Pancreas (tissue), 10 donors: ENCODE measurements at regions of chr3 and their contacts with region 1.

Region 1: GRCh38 chr3:133384331-133385027 is 15.4 kb upstream of the BFSP2 start:
- DNase-seq: peak; percentile 52 to 78 (median 67)
- ATAC-seq: peak; percentile 74 to 90 (median 88)
- H3K4me3 ChIP-seq: no peak overlapping the region
- H3K27ac ChIP-seq: no peak overlapping the region
- H3K4me1 ChIP-seq: peaks cover 6 to 14% (median 10%) of the 10 kb centered on the region in 3 donors
- H3K27me3 ChIP-seq: no peaks in the 10 kb centered on the region
- CTCF ChIP-seq: peak; percentile 15 to 70 (median 66)

Region 2: GRCh38 chr3:132722164-132723024 is 662.1 kb before region 1 on chr3 and contains the start of gene NPHP3:
- intact Hi-C with region 1: loop called in 1 of 3 experiments (anchors 10 kb)
- DNase-seq: peak; percentile 97 to 100 (median 98)
- ATAC-seq: peak; percentile 84 to 93 (median 89)
- H3K4me3 ChIP-seq: peak within 1 kb of the TSS; percentile 82 to 96 (median 88)
- H3K27ac ChIP-seq: peak within 1 kb of the TSS; percentile 80 to 96 (median 94)
- H3K4me1 ChIP-seq: peaks cover 0 to 20% (median 17%) of the 10 kb centered on the region in 3 donors
- H3K27me3 ChIP-seq: no peaks in the 10 kb centered on the region
- CTCF ChIP-seq: no peak
- total RNA-seq, gene NPHP3: 6.1 to 12.5 (median 10.3) TPM

Region 3: DNA sequence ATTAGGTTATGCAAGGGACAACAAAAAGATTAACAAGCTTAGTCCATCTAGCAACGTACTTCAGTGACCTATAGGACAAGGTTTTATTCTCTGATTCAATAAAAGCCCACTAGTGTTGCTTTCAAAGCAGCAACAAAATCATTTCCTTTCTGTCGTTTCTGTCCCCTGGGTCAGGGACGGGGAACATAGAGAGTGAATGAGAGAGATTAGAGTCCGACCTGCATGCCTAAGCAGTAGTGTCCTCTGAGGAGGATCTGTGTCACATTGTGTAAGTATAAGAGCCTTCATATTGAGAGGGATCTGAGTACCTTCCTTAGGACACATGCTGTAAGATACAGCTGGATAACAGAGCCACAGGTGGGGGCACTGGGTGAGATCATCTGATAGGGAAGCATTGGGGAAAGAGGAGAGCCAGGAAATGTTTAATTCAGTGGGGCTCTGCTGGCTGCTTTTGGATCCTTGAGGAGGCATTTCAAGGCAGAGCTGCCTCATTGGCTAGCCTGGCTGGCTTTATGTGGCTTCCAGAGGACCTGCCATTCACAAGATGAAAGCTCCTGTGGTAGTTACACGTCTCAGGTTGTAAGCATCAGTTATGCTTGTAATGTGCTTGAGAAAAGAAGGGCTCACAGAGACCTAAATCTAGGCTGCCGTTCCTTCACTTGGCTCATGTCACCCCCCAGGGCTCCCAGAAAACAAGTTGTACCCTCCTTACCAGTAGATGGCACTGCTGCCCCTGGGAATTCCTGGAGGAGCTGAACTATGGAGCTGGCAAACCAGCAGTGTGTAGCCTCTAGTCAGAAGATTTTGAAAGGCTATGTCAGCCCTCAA is 343.6 kb before region 1 on chr3:
- intact Hi-C with region 1: loop called in 2 of 3 experiments (anchors 10 kb)
- DNase-seq: peak; percentile 58 to 79 (median 69)
- ATAC-seq: peak; percentile 70 to 86 (median 82)
- H3K4me3 ChIP-seq: no peak overlapping the region
- H3K27ac ChIP-seq: no peak overlapping the region
- H3K4me1 ChIP-seq: no peaks in the 10 kb centered on the region
- H3K27me3 ChIP-seq: no peaks in the 10 kb centered on the region
- CTCF ChIP-seq: peak; percentile 44 to 69 (median 56)

Region 4: DNA sequence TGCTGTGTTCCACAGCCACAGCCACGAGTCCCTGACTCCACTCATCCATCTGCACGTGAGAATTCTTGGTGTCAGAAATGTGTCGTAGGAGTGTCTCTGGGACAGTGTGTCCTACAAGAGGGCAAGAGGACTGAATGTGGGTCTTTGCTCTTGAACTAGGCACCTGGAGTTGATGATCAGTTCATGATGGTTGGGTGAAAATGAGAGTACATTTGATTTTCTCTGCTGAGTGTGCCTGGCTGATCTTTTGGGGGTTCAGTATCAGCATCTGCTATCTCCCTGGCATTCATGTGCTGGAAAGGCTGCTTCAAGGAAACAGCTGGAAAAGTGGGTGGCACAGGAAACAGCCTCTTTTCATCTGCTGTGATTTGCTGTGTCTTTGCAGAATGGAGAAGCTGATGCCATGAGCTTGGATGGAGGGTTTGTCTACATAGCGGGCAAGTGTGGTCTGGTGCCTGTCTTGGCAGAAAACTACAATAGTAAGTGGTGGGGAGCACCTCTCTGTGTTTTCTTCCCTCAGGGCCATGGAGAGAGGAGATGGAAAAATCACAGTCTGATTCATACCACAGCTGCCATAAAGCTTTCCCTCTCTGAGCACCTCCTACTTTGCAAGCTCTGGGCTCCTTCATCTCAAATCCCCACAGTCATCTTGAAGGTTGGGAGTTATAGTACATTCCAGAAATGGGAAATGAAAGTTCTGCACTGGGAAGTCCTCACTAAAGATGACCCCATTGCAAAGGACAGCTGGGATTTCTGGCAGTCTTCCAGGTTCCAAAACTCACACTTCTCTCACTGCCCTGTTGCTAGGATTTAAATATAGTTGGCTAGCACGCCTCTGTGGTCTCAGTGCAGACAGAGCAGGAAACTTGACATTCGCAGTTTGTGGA is 379.6 kb after region 1 on chr3:
- intact Hi-C with region 1: no loop called
- DNase-seq: no peak
- ATAC-seq: peak in 3 of 4 donors; percentile 9 to 52 (median 18)
- H3K4me3 ChIP-seq: no peak overlapping the region
- H3K27ac ChIP-seq: no peak overlapping the region
- H3K4me1 ChIP-seq: no peaks in the 10 kb centered on the region
- H3K27me3 ChIP-seq: no peaks in the 10 kb centered on the region
- CTCF ChIP-seq: no peak